ENCODE measurements at regions of chr2 and their contacts with region 1.

Region 1: GRCh38 chr2:115480741-115481140 is 1038.3 kb downstream of the DPP10 start:
- DNase-seq: no peak
- H3K4me3 ChIP-seq: no peak overlapping the region
- H3K27ac ChIP-seq: no peak overlapping the region
- H3K27me3 ChIP-seq: no peaks in the 10 kb centered on the region
- CTCF ChIP-seq: no peak

Region 2: DNA sequence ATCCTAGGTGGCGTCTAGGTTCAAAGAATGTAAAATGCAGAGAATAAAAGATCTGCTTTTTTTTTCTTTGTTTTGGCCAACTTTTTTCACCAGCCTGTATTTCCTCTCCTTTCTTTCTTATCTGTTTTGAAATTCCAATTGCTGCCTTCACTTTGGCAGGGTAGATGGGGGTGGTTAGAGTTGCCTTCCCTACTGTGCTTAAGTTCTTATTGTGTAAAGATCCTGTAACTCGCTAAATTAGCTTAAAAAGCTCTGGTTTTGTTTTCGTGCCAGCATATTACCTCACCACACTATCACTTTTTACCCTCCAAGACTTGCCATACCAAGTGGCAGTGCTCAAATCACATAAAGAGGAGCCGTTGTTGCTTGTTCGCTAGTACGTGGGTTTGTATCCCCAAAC is 116.6 kb before region 1 on chr2:
- intact Hi-C with region 1: no loop called
- DNase-seq: no peak
- H3K4me3 ChIP-seq: no peak overlapping the region
- H3K27ac ChIP-seq: no peak overlapping the region
- H3K27me3 ChIP-seq: no peaks in the 10 kb centered on the region
- CTCF ChIP-seq: no peak

Region 3: DNA sequence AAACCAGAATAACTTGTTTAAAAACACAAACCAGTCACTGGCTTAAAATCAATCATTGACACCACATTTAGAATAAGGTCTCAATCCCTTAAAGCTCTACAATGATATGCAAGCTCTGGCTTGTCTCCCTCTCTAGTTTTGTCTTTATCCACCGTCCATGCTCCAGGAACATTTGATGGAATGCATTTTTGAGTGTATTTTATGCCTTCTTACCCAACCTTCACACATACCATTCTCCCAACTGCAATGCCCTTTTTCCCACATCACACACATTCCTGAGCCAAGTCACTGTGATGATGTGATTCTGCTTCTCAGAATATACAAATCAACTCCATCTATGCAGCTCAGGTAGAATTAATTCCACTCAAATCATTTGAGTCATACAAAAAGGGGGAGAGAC is 68.9 kb after region 1 on chr2:
- intact Hi-C with region 1: loop called in 1 of 2 experiments (anchors 2 kb)
- DNase-seq: no peak
- H3K4me3 ChIP-seq: no peak overlapping the region
- H3K27ac ChIP-seq: peak overlapping the region in 9 of 59 donors; percentile 0 to 44 (median 17)
- H3K27me3 ChIP-seq: no peaks in the 10 kb centered on the region
- CTCF ChIP-seq: no peak